GM12878 (cell line): ENCODE measurements at regions of chr1 and their contacts with region 1.

Region 1: DNA sequence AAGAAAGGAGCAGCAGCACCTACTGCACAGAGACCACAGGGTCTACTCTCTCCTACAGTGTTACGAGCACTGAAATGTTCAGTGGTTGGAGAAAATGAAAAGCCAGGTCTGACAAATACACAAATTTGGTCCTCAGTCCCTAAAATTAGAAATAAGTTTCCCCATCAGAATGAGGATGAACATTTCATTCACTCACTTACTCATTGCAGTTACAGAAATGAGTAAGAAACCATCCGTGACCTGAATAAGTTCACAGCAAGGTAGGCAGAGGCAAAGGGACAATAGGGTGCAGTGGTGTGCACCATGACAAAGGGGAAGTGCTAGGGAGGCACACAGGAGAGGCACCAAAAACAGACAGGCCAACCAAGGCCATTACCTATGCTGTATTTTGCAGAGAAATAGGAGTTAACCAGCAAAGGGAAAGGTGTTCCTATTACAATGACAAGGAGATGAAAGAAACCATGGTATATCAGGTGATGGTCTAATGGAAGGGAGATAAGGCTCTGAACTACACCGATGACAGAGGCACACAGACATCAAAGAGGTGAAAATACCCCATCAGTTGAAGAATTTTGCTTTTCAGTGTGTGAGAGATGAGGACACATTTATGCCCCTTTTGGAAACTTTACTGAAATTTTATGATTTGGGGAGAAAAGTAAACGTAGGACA is 29.4 kb downstream of the VAV3 start:
- DNase-seq: peak; percentile 92
- ATAC-seq: peak; percentile 91
- H3K4me3 ChIP-seq: 0 out of 2 replicates have a peak overlapping the region, but pooled peaks have one; percentile 38
- H3K27ac ChIP-seq: peak overlapping the region; percentile 77
- H3K4me1 ChIP-seq: peaks cover 35% of the 10 kb centered on the region
- H3K27me3 ChIP-seq: no peaks in the 10 kb centered on the region
- CTCF ChIP-seq: peak in 2 of 3 experiments; percentile 12 to 16; a peak in 2 of 6 replicates
- EP300 ChIP-seq: peak; percentile 88 to 99
- POLR2A ChIP-seq: no peak
- RAD21 ChIP-seq: peak; percentile 37; the same call in 1 of the 2 replicates

Region 2: GRCh38 chr1:107877092-107877491 is 58.4 kb before region 1 on chr1:
- CTCF ChIA-PET with region 1: interaction called, 5 read pairs
- POLR2A ChIA-PET with region 1: interaction called, 6 read pairs
- RAD21 ChIA-PET with region 1: interaction called, 8 read pairs
- SMC1A ChIA-PET with region 1: interaction called, 7 read pairs
- in situ Hi-C with region 1: no loop called
- intact Hi-C with region 1: loop called (anchors 2 kb)
- DNase-seq: no peak
- ATAC-seq: peak; percentile 70
- H3K4me3 ChIP-seq: no peak overlapping the region
- H3K27ac ChIP-seq: no peak overlapping the region
- H3K4me1 ChIP-seq: peaks cover 38% of the 10 kb centered on the region
- H3K27me3 ChIP-seq: no peaks in the 10 kb centered on the region
- CTCF ChIP-seq: no peak
- EP300 ChIP-seq: no peak
- POLR2A ChIP-seq: no peak
- RAD21 ChIP-seq: no peak

Region 3: DNA sequence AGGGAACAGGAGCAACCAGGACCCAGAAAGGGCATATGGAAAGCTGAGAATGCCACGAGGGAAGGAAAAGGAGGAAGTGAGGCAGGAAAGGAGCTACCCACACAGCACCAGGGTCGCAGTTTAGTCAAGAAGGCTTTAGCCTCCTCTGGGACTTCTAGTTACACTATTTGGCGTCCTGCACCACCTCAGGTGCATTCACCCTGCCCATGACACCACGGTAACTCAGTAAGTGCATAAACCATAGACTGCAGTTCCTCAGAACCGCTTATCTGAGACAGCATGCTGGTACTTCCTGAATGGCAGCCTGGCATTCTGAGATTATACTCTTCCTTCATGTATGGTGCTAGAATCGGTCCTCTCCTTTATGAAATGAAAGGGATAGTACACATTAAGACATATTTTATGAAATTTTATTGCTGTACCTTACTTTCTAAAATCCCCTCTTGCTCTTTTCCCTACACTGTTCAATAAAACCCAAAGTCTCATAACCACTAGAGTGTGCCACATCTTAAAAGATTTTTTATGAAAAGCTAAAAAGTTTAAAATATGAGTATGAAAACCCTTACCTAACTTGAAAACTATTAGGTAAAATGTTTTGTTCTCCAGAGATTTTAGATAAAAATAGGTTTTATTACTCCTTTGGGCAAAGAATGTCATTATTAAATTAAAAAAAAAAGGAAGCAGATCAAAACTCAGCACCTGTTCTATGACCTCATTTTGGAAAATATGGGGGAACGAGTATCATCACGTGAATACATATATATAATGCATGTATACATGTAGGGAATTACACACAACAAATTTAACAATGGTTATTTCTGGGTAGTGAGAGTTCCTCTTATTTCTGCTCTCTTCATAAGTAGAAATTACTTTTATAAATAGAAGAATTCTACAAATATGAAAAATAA is 37.8 kb before region 1 on chr1:
- CTCF ChIA-PET with region 1: interaction called, 5 read pairs
- POLR2A ChIA-PET with region 1: interaction called, 3 read pairs
- RAD21 ChIA-PET with region 1: interaction called, 3 read pairs
- SMC1A ChIA-PET with region 1: interaction called, 6 read pairs
- in situ Hi-C with region 1: no loop called
- intact Hi-C with region 1: loop called (anchors 2 kb)
- DNase-seq: no peak
- ATAC-seq: peak; percentile 76
- H3K4me3 ChIP-seq: no peak overlapping the region
- H3K27ac ChIP-seq: no peak overlapping the region
- H3K4me1 ChIP-seq: peaks cover 14% of the 10 kb centered on the region
- H3K27me3 ChIP-seq: no peaks in the 10 kb centered on the region
- CTCF ChIP-seq: no peak; a peak in 1 of 6 replicates
- EP300 ChIP-seq: no peak
- POLR2A ChIP-seq: no peak
- RAD21 ChIP-seq: no peak

Region 4: DNA sequence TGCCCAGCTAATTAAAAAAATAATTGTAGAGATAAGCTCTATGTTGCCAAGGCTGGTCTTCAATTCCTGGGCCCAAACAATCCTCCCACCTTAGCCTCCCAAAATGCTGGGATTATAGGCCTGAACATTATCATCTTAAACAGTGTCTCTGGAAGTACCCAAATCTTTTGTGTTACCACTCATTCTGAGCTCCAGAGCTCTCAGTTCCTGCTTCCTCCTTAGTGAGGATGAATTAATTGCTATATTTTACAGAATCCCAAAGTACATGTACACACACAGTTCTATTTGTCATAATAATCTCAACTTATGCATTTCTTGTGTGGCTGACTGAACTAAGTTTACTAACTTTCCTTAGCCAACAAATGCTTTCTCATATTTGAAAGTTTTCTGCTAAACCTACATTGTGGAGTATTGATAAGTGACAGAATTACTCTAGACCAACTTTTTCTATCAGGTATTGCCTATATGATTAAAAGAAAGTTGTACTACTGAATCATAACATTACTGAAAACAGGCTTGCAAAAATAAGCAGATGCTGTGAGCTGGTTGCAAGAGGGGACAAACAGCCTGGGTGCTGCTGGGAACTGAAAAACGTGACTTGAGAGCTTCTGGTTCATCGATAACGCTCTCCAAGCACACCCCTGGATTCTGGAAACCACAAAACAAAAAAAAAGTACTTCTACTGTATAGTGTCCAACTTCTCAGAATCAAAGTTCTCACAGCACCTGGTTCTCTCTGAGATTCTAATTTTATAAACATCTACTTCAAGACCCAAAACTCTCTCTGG is 14.1 kb after region 1 on chr1:
- CTCF ChIA-PET with region 1: interaction called, 10 read pairs
- POLR2A ChIA-PET with region 1: interaction called, 4 read pairs
- RAD21 ChIA-PET with region 1: interaction called, 4 read pairs
- SMC1A ChIA-PET with region 1: interaction called, 10 read pairs
- in situ Hi-C with region 1: no loop called
- intact Hi-C with region 1: loop called (anchors 1 kb)
- DNase-seq: peak; percentile 69
- ATAC-seq: peak; percentile 89
- H3K4me3 ChIP-seq: no peak overlapping the region; the same call in 1 of the 2 replicates
- H3K27ac ChIP-seq: peak overlapping the region; percentile 62
- H3K4me1 ChIP-seq: peaks cover 18% of the 10 kb centered on the region
- H3K27me3 ChIP-seq: no peaks in the 10 kb centered on the region; a peak in 1 of 4 replicates
- CTCF ChIP-seq: no peak
- EP300 ChIP-seq: 0 out of 4 replicates have a peak, but pooled peaks of 1 of the 2 experiments have one; percentile 40
- POLR2A ChIP-seq: no peak
- RAD21 ChIP-seq: no peak

Region 5: GRCh38 chr1:107963601-107964335 is 28.2 kb after region 1 on chr1:
- CTCF ChIA-PET with region 1: interaction called, 3 read pairs
- POLR2A ChIA-PET with region 1: interaction called, 5 read pairs
- RAD21 ChIA-PET with region 1: interaction called, 15 read pairs
- SMC1A ChIA-PET with region 1: interaction called, 15 read pairs
- in situ Hi-C with region 1: no loop called
- intact Hi-C with region 1: loop called (anchors 1 kb)
- DNase-seq: peak; percentile 62
- ATAC-seq: peak; percentile 75
- H3K4me3 ChIP-seq: peak overlapping the region; percentile 87
- H3K27ac ChIP-seq: peak overlapping the region; percentile 48
- H3K4me1 ChIP-seq: peaks cover 10% of the 10 kb centered on the region
- H3K27me3 ChIP-seq: no peaks in the 10 kb centered on the region; a peak in 1 of 4 replicates
- CTCF ChIP-seq: no peak
- EP300 ChIP-seq: no peak
- POLR2A ChIP-seq: no peak
- RAD21 ChIP-seq: no peak